CD4-positive, alpha-beta memory T cell (primary cell): ENCODE measurements at regions of chr19 and their contacts with region 1.

Region 1: DNA sequence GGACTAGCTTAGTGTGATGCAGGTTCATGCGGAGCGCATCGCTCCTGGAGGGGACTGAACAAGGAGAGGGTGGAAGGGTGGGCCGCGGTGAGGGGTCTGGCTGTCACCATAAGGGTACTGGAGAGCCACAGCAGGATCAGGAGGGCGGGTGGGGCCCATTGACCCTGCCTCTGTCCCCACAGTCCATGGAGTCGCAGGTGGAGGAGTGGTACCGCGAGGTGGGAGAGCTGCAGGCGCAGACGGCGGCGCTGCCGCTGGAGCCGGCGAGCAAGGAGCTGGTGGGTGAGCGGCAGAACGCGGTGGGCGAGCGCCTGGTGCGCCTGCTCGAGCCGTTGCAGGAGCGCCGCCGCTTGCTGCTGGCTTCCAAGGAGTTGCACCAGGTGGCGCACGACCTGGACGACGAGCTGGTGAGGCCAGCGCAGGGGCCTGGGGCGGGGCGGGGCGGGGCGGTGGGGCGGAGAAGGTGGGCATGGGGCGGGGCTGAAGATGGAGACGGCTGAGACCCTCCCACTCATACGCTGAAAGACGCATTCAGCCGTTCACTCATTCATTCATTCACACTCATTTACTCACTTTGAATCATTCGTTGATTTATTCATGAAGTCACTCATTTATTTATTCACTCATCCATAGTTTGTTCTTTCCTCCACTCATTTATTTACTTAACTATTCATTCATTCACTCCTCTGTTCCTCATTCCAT is 27.5 kb upstream of the SHKBP1 start:
- DNase-seq: peak; percentile 57 to 66 (median 61)
- H3K4me3 ChIP-seq: no peak overlapping the region
- H3K4me3 Mint-ChIP-seq: peak overlapping the region; percentile 5 to 55 (median 38)
- H3K27ac ChIP-seq: no peak overlapping the region
- H3K27ac Mint-ChIP-seq: no peak overlapping the region
- H3K4me1 ChIP-seq: peaks cover 5% of the 10 kb centered on the region
- H3K4me1 Mint-ChIP-seq: peaks cover 5 to 11% (median 8%) of the 10 kb centered on the region in 4 donors
- H3K27me3 ChIP-seq: peaks cover 5% of the 10 kb centered on the region
- H3K27me3 Mint-ChIP-seq: peaks cover 36 to 49% of the 10 kb centered on the region in 2 donors

Region 2: DNA sequence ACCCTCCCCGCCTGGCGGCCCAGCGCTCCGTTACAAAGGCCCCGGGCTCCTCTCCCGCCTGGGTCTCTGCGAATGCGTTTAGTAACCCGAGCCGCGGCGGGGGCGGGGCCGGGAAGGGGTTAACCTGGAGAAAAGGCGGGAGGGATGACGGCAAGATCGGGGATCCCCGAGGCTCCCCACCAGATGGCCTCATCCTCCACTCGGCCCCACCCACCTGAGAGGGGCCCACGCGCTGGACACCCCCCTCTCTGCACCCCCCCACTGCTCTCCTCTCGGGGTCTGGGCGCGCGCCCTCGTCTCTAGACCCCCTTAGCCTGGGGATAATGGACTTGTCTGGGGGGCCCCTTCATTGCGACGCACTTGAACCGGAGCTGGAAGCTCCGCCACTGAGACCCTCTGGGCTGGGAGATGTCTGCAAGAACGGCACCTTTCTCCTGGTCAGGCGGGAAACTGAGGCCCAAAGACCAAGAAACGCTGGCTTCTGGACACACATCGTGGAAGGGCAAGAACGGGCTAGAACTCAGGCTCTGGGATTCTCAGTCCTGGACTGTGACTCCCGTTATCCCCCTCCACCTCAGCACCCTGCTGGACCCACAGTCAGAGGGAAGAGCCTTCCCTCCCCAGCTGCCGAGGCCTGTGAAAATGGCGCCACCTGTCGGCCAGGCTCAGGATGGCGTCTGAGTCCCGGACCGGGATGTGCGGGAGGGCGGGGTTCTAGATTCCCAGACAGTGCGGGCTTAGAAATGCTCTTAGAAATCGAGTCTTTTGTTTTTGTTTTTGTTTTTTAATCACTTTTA is 49.2 kb after region 1 on chr19:
- CTCF ChIA-PET with region 1: interaction called, 57 read pairs
- POLR2A ChIA-PET with region 1: interaction called, 8 read pairs
- intact Hi-C with region 1: loop called (anchors 1 kb)
- DNase-seq: peak; percentile 76 to 83 (median 78)
- H3K4me3 ChIP-seq: no peak overlapping the region
- H3K4me3 Mint-ChIP-seq: peak overlapping the region in 4 of 8 donors; percentile 45 to 58 (median 55)
- H3K27ac ChIP-seq: no peak overlapping the region
- H3K27ac Mint-ChIP-seq: peak overlapping the region in 3 of 7 donors; percentile 28 to 68 (median 42)
- H3K4me1 ChIP-seq: peaks cover 64% of the 10 kb centered on the region
- H3K4me1 Mint-ChIP-seq: peaks cover 34 to 63% (median 47%) of the 10 kb centered on the region in 4 donors
- H3K27me3 ChIP-seq: peaks cover 26% of the 10 kb centered on the region
- H3K27me3 Mint-ChIP-seq: peaks cover 19 to 29% of the 10 kb centered on the region in 2 donors

Region 3: GRCh38 chr19:40640744-40641143 is 91.6 kb after region 1 on chr19:
- CTCF ChIA-PET with region 1: interaction called, 40 read pairs
- POLR2A ChIA-PET with region 1: no interaction called
- intact Hi-C with region 1: loop called (anchors 2 kb)
- DNase-seq: no peak
- H3K4me3 ChIP-seq: no peak overlapping the region
- H3K4me3 Mint-ChIP-seq: no peak overlapping the region
- H3K27ac ChIP-seq: no peak overlapping the region
- H3K27ac Mint-ChIP-seq: peak overlapping the region in 1 of 7 donors; percentile 61
- H3K4me1 ChIP-seq: no peaks in the 10 kb centered on the region
- H3K4me1 Mint-ChIP-seq: peaks cover 0 to 3% (median 2%) of the 10 kb centered on the region in 4 donors
- H3K27me3 ChIP-seq: no peaks in the 10 kb centered on the region
- H3K27me3 Mint-ChIP-seq: peaks cover 2 to 4% of the 10 kb centered on the region in 2 donors